Heart left ventricle (tissue), 16 donors: ENCODE measurements at regions of chr7 and their contacts with region 1.

Region 1: DNA sequence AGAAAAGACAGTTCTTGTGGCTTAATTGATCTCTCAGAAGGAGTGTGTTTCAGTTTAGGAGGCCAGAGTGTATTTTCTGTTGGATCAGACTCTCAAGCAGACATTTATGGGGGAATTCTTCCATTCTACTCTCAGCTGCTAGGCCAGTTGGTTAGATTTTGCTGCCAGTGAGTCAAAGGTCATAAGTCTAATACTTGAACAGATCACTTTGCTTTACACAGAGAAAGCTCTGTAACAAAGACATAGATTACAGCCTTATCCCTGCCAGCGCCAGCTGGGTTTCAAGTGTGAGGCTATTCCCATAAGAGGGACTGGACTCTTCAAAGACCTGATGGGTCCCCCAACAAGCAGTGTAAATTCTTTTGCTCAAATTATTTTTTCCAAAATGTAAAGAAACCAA is 145.6 kb upstream of the SEMA3C start:
- DNase-seq: no peak
- ATAC-seq: peak in 2 of 4 donors; percentile 38 to 47
- H3K4me3 ChIP-seq: no peak overlapping the region
- H3K27ac ChIP-seq: peak overlapping the region in 1 of 12 donors; percentile 10
- H3K4me1 ChIP-seq: peaks cover 0 to 30% (median 2%) of the 10 kb centered on the region in 12 donors
- H3K27me3 ChIP-seq: no peaks in the 10 kb centered on the region
- CTCF ChIP-seq: no peak
- POLR2A ChIP-seq: no peak

Region 2: DNA sequence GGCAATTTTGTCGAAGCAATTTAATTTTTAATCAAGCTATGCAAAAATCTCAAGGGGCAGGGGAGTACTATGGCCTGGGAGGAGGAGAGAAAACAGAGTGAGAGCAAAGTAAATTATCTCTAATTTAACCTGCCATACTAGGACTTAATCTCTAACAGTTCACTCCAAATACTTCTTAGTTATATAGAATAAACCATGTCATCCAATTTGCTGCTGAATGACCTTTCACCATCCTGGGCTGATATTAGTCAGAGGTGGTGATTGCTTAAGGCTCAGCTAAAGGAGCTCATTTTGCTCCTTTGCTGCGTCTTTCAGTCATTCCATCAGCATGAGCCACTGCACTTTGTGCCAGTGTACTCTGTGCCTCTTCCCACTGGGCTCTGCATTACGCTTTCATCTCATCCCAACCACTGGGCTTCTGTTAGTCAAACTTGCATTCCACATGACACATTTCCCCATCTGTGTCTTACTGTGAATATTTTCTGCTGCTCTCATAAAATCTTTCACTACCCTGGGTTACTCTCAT is 341.7 kb before region 1 on chr7:
- intact Hi-C with region 1: loop called in 1 of 10 experiments (anchors 10 kb)
- DNase-seq: peak in 2 of 5 donors; percentile 66 to 68
- ATAC-seq: peak; percentile 28 to 96 (median 82)
- H3K4me3 ChIP-seq: no peak overlapping the region
- H3K27ac ChIP-seq: peak overlapping the region in 7 of 12 donors; percentile 4 to 70 (median 54)
- H3K4me1 ChIP-seq: peaks cover 0 to 32% (median 4%) of the 10 kb centered on the region in 12 donors
- H3K27me3 ChIP-seq: no peaks in the 10 kb centered on the region
- CTCF ChIP-seq: no peak
- POLR2A ChIP-seq: no peak